Adrenal gland (tissue), 19 donors: ENCODE measurements at regions of chr4 and their contacts with region 1.

Region 1: DNA sequence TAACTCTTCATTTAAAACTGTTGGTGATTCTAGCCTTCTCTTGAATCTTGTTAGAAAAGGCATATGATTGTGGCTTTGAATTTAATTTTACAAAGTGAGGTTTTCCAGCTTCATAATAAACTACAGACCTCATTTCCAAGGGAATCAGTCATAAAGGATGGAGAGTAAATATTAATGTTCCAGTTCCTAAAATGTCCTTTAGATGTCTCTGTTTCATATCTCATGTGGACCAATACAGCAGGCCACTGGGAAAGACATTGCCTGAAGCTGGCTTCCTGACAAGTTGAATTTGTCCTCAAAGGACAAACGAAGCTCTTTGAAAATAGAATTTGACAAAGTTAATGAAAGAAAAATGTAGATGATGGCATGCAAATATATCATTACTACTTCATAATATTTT is 125.4 kb downstream of the ZNF330 start:
- DNase-seq: peak; percentile 32 to 73 (median 49)
- H3K4me3 ChIP-seq: no peak overlapping the region
- H3K27ac ChIP-seq: no peak overlapping the region
- H3K4me1 ChIP-seq: peaks cover 0 to 4% of the 10 kb centered on the region in 2 donors
- H3K27me3 ChIP-seq: no peaks in the 10 kb centered on the region
- CTCF ChIP-seq: peak; percentile 35 to 73 (median 66)
- POLR2A ChIP-seq: no peak

Region 2: GRCh38 chr4:141391771-141392170 is 45.6 kb after region 1 on chr4:
- intact Hi-C with region 1: no loop called
- DNase-seq: no peak
- H3K4me3 ChIP-seq: no peak overlapping the region
- H3K27ac ChIP-seq: no peak overlapping the region
- H3K4me1 ChIP-seq: no peaks in the 10 kb centered on the region
- H3K27me3 ChIP-seq: no peaks in the 10 kb centered on the region
- CTCF ChIP-seq: no peak
- POLR2A ChIP-seq: no peak

Region 3: GRCh38 chr4:141425124-141425523 is 79.0 kb after region 1 on chr4:
- intact Hi-C with region 1: no loop called
- DNase-seq: no peak
- H3K4me3 ChIP-seq: no peak overlapping the region
- H3K27ac ChIP-seq: no peak overlapping the region
- H3K4me1 ChIP-seq: no peaks in the 10 kb centered on the region
- H3K27me3 ChIP-seq: no peaks in the 10 kb centered on the region
- CTCF ChIP-seq: no peak
- POLR2A ChIP-seq: no peak

Region 4: GRCh38 chr4:141702472-141703182 is 356.5 kb after region 1 on chr4:
- intact Hi-C with region 1: loop called in 1 of 2 experiments (anchors 10 kb)
- DNase-seq: peak in 1 of 7 donors; percentile 21
- H3K4me3 ChIP-seq: no peak overlapping the region
- H3K27ac ChIP-seq: no peak overlapping the region
- H3K4me1 ChIP-seq: no peaks in the 10 kb centered on the region
- H3K27me3 ChIP-seq: no peaks in the 10 kb centered on the region
- CTCF ChIP-seq: no peak
- POLR2A ChIP-seq: no peak